ENCODE measurements at regions of chrX and their contacts with region 1.

Region 1: GRCh38 chrX:134600714-134601113 is 57.6 kb downstream of the PLAC1 start:
- DNase-seq: peak in 1 of 2 experiments; percentile 83
- H3K4me3 ChIP-seq: no peak overlapping the region
- H3K27ac ChIP-seq: no peak overlapping the region
- H3K4me1 ChIP-seq: peaks cover 35% of the 10 kb centered on the region
- H3K27me3 ChIP-seq: no peaks in the 10 kb centered on the region
- CTCF ChIP-seq: no peak

Region 2: GRCh38 chrX:134580907-134581306 is 19.8 kb before region 1 on chrX:
- CTCF ChIA-PET with region 1: no interaction called
- POLR2A ChIA-PET with region 1: interaction called, 21 read pairs
- intact Hi-C with region 1: no loop called
- DNase-seq: no peak
- H3K4me3 ChIP-seq: no peak overlapping the region
- H3K27ac ChIP-seq: no peak overlapping the region
- H3K4me1 ChIP-seq: peaks cover 25% of the 10 kb centered on the region
- H3K27me3 ChIP-seq: no peaks in the 10 kb centered on the region
- CTCF ChIP-seq: no peak

Region 3: DNA sequence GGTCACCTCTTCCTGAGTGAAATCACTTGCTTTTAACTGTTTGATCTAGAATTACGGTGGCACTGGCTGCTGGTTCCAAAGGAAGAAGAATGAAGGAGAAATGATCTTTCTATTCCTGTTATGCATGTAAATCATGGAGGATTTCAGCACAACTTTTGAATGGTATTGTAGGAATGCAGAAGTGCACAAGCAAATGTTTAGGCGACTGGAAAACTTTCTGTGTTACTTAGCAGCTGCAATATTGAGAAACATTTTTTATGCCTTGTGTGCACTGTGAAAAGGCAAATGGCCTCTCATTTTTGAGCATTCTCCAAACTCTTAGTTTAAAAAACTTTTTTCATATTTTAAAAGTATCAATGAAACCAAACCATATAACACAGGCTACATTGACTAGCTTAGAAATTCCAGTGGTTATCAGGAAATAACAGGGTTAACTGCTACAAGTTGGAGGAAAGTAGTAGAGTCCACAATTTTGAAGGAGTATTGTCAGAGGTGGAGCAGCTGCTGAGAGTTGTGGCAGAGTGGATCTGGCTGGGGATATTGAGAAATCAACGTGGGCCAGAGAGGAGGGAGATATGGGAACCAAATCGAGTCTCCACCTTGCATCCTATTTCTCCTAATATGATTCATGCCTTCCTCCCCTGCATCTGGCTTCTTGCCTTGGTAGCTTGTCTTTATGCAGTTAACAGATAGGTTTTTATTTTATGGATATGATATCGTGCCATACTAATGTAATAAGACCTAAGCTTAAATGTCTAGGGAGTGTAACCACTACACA is 1514.6 kb after region 1 on chrX:
- CTCF ChIA-PET with region 1: no interaction called
- POLR2A ChIA-PET with region 1: interaction called, 15 read pairs
- intact Hi-C with region 1: no loop called
- DNase-seq: no peak
- H3K4me3 ChIP-seq: no peak overlapping the region
- H3K27ac ChIP-seq: no peak overlapping the region
- H3K4me1 ChIP-seq: no peaks in the 10 kb centered on the region
- H3K27me3 ChIP-seq: no peaks in the 10 kb centered on the region
- CTCF ChIP-seq: no peak